CD14-positive monocyte (primary cell): ENCODE measurements at regions of chr7 and their contacts with region 1.

Region 1: GRCh38 chr7:120927454-120928103 is 23.0 kb upstream of the ING3 start:
- DNase-seq: peak in 1 of 3 donors; percentile 15
- H3K4me3 ChIP-seq: no peak overlapping the region
- H3K4me3 Mint-ChIP-seq: no peak overlapping the region
- H3K27ac ChIP-seq: no peak overlapping the region
- H3K27ac Mint-ChIP-seq: no peak overlapping the region
- H3K4me1 ChIP-seq: peaks cover 0 to 12% of the 10 kb centered on the region in 2 donors
- H3K4me1 Mint-ChIP-seq: peaks cover 26% of the 10 kb centered on the region
- H3K27me3 ChIP-seq: no peaks in the 10 kb centered on the region
- H3K27me3 Mint-ChIP-seq: peaks cover 2 to 8% (median 3%) of the 10 kb centered on the region in 3 donors
- CTCF ChIP-seq: no peak

Region 2: GRCh38 chr7:119664601-119665000 is 1263.0 kb before region 1 on chr7:
- intact Hi-C with region 1: no loop called
- DNase-seq: no peak
- H3K4me3 ChIP-seq: no peak overlapping the region
- H3K4me3 Mint-ChIP-seq: no peak overlapping the region
- H3K27ac ChIP-seq: no peak overlapping the region
- H3K27ac Mint-ChIP-seq: no peak overlapping the region
- H3K4me1 ChIP-seq: no peaks in the 10 kb centered on the region
- H3K4me1 Mint-ChIP-seq: no peaks in the 10 kb centered on the region
- H3K27me3 ChIP-seq: no peaks in the 10 kb centered on the region
- H3K27me3 Mint-ChIP-seq: no peaks in the 10 kb centered on the region
- CTCF ChIP-seq: no peak

Region 3: GRCh38 chr7:120792091-120792860 is 135.3 kb before region 1 on chr7:
- intact Hi-C with region 1: loop called in 1 of 2 experiments (anchors 10 kb)
- DNase-seq: peak; percentile 19 to 51 (median 43)
- H3K4me3 ChIP-seq: no peak overlapping the region
- H3K4me3 Mint-ChIP-seq: no peak overlapping the region
- H3K27ac ChIP-seq: no peak overlapping the region
- H3K27ac Mint-ChIP-seq: no peak overlapping the region
- H3K4me1 ChIP-seq: no peaks in the 10 kb centered on the region
- H3K4me1 Mint-ChIP-seq: no peaks in the 10 kb centered on the region
- H3K27me3 ChIP-seq: no peaks in the 10 kb centered on the region
- H3K27me3 Mint-ChIP-seq: peaks cover 0 to 3% (median 3%) of the 10 kb centered on the region in 3 donors
- CTCF ChIP-seq: peak; percentile 92

Region 4: GRCh38 chr7:121076350-121077164 is 149.0 kb after region 1 on chr7:
- intact Hi-C with region 1: no loop called
- DNase-seq: no peak
- H3K4me3 ChIP-seq: no peak overlapping the region
- H3K4me3 Mint-ChIP-seq: no peak overlapping the region
- H3K27ac ChIP-seq: no peak overlapping the region
- H3K27ac Mint-ChIP-seq: peak overlapping the region in 2 of 7 donors; percentile 15 to 20
- H3K4me1 ChIP-seq: no peaks in the 10 kb centered on the region
- H3K4me1 Mint-ChIP-seq: peaks cover 7% of the 10 kb centered on the region
- H3K27me3 ChIP-seq: no peaks in the 10 kb centered on the region
- H3K27me3 Mint-ChIP-seq: peaks cover 0 to 2% (median 2%) of the 10 kb centered on the region in 3 donors
- CTCF ChIP-seq: no peak